ENCODE measurements at regions of chr15 and their contacts with region 1.

Region 1: DNA sequence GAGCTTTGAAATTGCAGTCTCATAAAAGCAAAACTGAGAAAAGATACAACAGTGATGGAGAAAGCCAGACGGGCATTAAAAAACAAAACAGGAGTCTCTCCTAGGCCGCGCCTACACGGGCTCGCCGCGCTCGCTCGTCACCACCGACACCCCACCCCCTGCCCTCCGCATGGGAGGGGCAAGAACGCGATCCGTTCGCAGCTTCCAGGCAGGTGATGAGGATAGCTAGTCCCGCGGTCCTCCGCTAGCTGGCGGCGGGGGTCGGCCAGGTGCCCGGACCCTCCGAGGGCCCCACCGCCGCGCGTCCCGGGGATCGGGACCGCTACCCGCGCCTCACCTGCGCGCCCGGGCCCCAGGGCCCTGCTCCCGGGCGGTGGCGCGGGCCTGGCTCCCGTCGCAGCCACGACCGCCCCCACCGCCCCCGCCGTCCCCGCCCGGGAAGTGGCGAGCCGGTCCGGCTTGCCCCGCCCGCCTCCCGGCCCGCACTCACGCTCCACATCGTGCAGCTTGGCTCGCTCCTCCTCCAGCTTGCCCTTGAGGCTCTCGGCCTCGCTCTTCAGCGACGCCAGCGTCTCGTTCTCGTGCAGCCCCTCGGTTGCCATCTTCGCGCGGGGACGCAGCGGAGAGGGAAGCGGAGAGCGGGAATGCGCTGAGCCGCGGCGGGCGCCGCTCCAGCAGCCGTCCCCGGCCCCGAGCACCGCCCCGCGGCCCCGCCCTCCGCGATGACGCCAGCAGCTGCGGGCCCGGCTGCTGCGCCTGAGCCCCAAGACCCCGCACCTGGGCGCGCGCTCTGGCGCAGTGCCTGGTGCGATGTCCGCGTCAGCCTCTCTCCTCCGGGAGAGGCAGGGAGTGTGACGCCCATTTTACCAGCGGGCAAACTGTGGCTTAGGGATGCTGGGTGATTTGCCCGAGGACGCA is 11.7 kb downstream of the GNB5 start:
- DNase-seq: peak; percentile 82
- H3K4me3 ChIP-seq: peak overlapping the region; percentile 18 to 85 (median 70)
- H3K27ac ChIP-seq: peak overlapping the region; percentile 58
- H3K4me1 ChIP-seq: peaks cover 9% of the 10 kb centered on the region
- H3K27me3 ChIP-seq: no peaks in the 10 kb centered on the region
- CTCF ChIP-seq: no peak
- POLR2A ChIP-seq: peak; percentile 59

Region 2: GRCh38 chr15:52163321-52164190 is 16.0 kb before region 1 on chr15:
- CTCF ChIA-PET with region 1: interaction called, 12 read pairs
- POLR2A ChIA-PET with region 1: no interaction called
- dilution Hi-C with region 1: no loop called
- intact Hi-C with region 1: no loop called
- DNase-seq: no peak
- H3K4me3 ChIP-seq: no peak overlapping the region
- H3K27ac ChIP-seq: no peak overlapping the region
- H3K4me1 ChIP-seq: no peaks in the 10 kb centered on the region
- H3K27me3 ChIP-seq: no peaks in the 10 kb centered on the region
- CTCF ChIP-seq: peak; percentile 19 to 38
- POLR2A ChIP-seq: no peak

Region 3: DNA sequence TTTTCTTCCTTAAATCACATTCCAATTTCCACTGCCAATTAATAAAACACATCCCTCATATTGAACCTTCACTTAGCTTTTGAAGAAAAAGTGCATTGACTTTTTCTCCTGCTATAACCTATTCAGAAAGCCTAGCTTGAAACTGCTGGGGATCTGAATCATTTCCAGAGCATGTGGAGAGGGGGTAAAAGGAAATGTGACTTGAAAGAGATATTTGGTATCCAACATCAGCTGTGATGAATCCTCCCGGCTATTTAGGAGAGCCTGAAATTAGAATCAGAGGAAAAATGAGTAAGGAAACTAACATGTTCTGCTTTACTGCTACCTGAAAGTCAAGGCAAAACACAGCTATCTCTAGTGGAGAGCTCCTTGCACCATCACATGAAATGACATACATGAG is 14.3 kb after region 1 on chr15:
- CTCF ChIA-PET with region 1: interaction called, 13 read pairs
- POLR2A ChIA-PET with region 1: no interaction called
- dilution Hi-C with region 1: no loop called
- intact Hi-C with region 1: no loop called
- DNase-seq: no peak
- H3K4me3 ChIP-seq: no peak overlapping the region
- H3K27ac ChIP-seq: no peak overlapping the region
- H3K4me1 ChIP-seq: no peaks in the 10 kb centered on the region
- H3K27me3 ChIP-seq: peaks cover 0 to 2% of the 10 kb centered on the region in 2 experiments
- CTCF ChIP-seq: no peak
- POLR2A ChIP-seq: no peak

Region 4: GRCh38 chr15:52200831-52201365 is 21.4 kb after region 1 on chr15:
- CTCF ChIA-PET with region 1: interaction called, 39 read pairs
- POLR2A ChIA-PET with region 1: no interaction called
- dilution Hi-C with region 1: no loop called
- intact Hi-C with region 1: no loop called
- DNase-seq: peak; percentile 37
- H3K4me3 ChIP-seq: no peak overlapping the region
- H3K27ac ChIP-seq: no peak overlapping the region
- H3K4me1 ChIP-seq: peaks cover under 1% of the 10 kb centered on the region
- H3K27me3 ChIP-seq: peaks cover 0 to 2% of the 10 kb centered on the region in 2 experiments
- CTCF ChIP-seq: no peak
- POLR2A ChIP-seq: no peak

Region 5: GRCh38 chr15:52208306-52208946 is 28.9 kb after region 1 on chr15:
- CTCF ChIA-PET with region 1: interaction called, 39 read pairs
- POLR2A ChIA-PET with region 1: no interaction called
- dilution Hi-C with region 1: no loop called
- intact Hi-C with region 1: loop called (anchors 1 kb)
- DNase-seq: peak; percentile 73
- H3K4me3 ChIP-seq: no peak overlapping the region
- H3K27ac ChIP-seq: no peak overlapping the region
- H3K4me1 ChIP-seq: peaks cover 17% of the 10 kb centered on the region
- H3K27me3 ChIP-seq: no peaks in the 10 kb centered on the region
- CTCF ChIP-seq: peak; percentile 71 to 86
- POLR2A ChIP-seq: no peak

Measured in endothelial cell of umbilical vein (primary cell).